ENCODE measurements at regions of chr18 and their contacts with region 1.

Region 1: DNA sequence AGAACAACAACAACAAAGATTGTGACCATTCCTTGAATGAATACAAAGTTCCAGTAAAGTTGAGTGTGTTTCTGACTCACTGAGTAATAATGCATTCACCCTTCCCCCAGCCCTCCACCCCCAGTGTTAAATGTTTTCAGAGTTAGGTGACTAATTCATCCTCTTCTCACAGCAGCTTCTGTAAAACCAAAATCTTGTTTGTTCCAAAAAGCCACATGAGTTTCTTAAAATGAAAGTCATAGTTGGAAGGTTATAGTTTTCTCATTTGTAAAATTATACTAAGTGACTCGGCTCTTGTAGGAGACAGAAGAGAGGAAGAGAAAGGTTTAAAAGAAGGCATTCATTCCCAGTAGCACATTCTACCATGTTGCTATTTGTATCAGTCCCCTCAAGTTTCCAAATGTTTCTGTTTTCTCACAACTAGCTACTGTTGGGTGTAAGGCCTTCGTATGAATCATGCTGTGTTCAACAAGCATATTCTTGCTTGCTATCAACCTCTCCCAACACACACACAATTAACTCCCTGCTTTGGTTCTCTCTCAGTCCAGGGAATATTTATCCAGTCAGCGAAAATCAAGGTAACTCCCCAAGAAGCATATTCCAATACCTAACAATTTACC is 75.3 kb downstream of the MBD2 start:
- DNase-seq: no peak
- H3K4me3 Mint-ChIP-seq: peak overlapping the region; percentile 43
- H3K27ac Mint-ChIP-seq: peak overlapping the region; percentile 94
- H3K4me1 Mint-ChIP-seq: peaks cover 48% of the 10 kb centered on the region
- H3K27me3 Mint-ChIP-seq: no peaks in the 10 kb centered on the region

Region 2: DNA sequence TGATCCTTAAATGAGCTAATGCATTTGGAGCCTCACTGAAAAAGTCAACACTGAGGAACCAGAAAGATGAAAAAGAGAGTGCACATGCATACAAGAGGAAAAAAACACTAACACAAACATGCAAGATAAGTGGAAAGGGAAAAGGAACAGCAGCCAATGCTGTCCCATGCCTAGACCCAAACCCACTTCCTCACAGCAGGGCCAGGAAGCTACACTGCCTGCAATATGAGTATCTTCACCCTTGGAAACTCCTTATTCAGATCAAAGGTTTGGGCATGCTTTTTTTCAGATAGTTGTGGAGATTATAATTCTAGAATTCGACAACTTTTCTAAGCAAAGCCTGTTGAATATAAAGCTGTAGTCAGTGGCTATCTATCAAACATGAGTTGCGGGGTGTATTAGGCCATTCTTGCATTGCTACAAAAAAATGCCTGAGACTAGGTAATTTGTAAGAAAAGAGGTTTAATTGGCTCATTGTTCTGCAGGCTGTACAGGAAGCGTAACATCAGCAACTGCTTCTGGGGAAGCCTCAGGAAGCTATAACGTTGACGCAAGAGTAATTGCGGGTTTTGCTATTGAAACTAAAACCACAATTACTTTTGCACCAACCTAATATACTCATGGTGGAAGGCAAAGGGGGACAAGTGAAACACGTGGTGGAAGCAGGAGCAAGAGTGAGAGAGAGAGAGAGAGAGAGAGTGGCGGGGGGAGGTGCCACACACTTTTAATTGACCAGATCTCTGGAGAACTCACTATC is 63.0 kb before region 1 on chr18:
- intact Hi-C with region 1: loop called (anchors 5 kb)
- DNase-seq: peak; percentile 14
- H3K4me3 Mint-ChIP-seq: peak overlapping the region; percentile 18
- H3K27ac Mint-ChIP-seq: peak overlapping the region; percentile 49
- H3K4me1 Mint-ChIP-seq: peaks cover 32% of the 10 kb centered on the region
- H3K27me3 Mint-ChIP-seq: no peaks in the 10 kb centered on the region

Region 3: DNA sequence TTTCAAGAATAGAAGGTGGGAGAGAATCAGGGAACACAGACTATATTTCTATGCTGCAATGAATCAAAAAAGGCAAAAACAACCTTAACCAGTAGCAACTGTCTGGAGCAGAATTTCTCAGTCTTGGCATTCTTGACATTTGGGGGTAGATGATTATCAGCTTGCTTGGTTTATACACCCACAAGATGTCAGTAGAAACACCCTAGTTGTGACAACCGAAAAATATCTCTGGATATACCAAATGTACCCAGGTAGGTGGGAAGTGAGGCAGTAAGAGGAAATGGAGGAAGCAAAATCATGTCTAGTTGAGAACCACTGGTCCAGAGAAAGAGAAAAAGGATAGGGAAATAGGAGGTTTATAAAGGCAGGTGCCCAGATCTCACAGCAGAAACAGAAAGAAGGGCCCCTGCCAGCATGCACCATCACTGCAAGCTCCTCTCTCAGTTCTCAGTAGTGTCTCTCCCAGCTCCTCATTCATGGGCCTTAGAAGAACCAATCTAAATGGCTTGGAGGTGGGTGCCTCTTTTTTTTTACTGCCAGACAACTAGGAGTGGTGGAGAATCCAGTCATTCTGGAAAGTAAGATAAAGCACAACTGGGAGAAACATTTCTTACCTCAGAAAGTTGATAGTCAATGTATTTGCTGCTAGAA is 24.9 kb after region 1 on chr18:
- intact Hi-C with region 1: loop called (anchors 1 kb)
- DNase-seq: no peak
- H3K4me3 Mint-ChIP-seq: peak overlapping the region; percentile 41
- H3K27ac Mint-ChIP-seq: peak overlapping the region; percentile 94
- H3K4me1 Mint-ChIP-seq: peaks cover 61% of the 10 kb centered on the region
- H3K27me3 Mint-ChIP-seq: no peaks in the 10 kb centered on the region

Region 4: DNA sequence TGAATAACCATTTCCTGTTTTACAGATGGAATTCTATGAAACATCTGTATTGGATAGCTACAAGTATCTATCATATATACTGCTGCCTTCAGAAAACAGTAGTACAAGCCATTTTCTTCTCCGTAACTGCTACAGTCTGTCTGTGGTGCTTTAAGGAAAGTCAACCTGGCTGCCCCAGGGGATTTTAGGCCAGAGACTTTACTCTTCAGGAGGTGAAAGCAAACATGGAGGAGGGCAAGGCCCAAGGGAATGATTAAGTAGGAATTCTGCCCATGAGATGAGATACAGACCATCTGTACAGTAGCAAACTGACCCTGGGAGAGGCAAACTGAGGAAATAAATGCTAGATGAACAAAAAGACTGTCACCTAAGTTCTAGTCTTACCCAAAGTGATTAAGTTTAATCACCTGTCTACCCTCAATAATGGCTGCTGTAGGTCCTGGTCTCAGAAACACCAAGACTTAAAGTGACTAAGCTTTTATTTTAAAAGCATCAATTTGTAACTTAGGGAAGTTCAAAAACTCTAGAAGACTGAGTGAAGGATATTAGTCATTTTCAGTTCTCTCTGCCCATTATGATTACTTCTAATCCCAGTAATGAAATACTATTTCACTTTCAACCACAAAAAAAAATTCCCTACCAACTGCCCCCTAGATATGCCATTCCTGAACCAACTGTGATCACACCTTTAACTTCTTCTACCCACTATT is 60.4 kb after region 1 on chr18:
- intact Hi-C with region 1: loop called (anchors 1 kb)
- DNase-seq: no peak
- H3K4me3 Mint-ChIP-seq: peak overlapping the region; percentile 53
- H3K27ac Mint-ChIP-seq: peak overlapping the region; percentile 84
- H3K4me1 Mint-ChIP-seq: peaks cover 59% of the 10 kb centered on the region
- H3K27me3 Mint-ChIP-seq: no peaks in the 10 kb centered on the region

Region 5: GRCh38 chr18:54357660-54358494 is 208.7 kb after region 1 on chr18 and contains the starts of genes C18orf54 and STARD6:
- intact Hi-C with region 1: loop called (anchors 2 kb)
- DNase-seq: peak; percentile 90
- H3K4me3 Mint-ChIP-seq: peak within 1 kb of the TSS; percentile 99
- H3K27ac Mint-ChIP-seq: peak within 1 kb of the TSS; percentile 97
- H3K4me1 Mint-ChIP-seq: peaks cover 21% of the 10 kb centered on the region
- H3K27me3 Mint-ChIP-seq: no peaks in the 10 kb centered on the region
- total RNA-seq, gene C18orf54: 10.4 and 10.9 TPM in 2 replicates
- total RNA-seq, gene STARD6: not detected in 2 replicates